Activated naive CD4-positive, alpha-beta T cell treated with anti-CD3 and anti-CD28 coated beads for 36 hours (primary cell): ENCODE measurements at regions of chr18 and their contacts with region 1.

Region 1: GRCh38 chr18:5197032-5197434 is at the start of gene AKAIN1:
- DNase-seq: peak; percentile 30
- H3K4me3 Mint-ChIP-seq: peak within 1 kb of the TSS; percentile 72
- H3K27ac Mint-ChIP-seq: no peak within 1 kb of the TSS
- H3K4me1 Mint-ChIP-seq: peaks cover 20% of the 10 kb centered on the region
- H3K27me3 Mint-ChIP-seq: peaks cover 58% of the 10 kb centered on the region
- total RNA-seq, gene AKAIN1: not detected

Region 2: GRCh38 chr18:5106730-5107129 is 90.3 kb before region 1 on chr18:
- CTCF ChIA-PET with region 1: no interaction called
- intact Hi-C with region 1: loop called (anchors 2 kb)
- DNase-seq: no peak
- H3K4me3 Mint-ChIP-seq: no peak overlapping the region
- H3K27ac Mint-ChIP-seq: no peak overlapping the region
- H3K4me1 Mint-ChIP-seq: peaks cover 5% of the 10 kb centered on the region
- H3K27me3 Mint-ChIP-seq: no peaks in the 10 kb centered on the region

Region 3: DNA sequence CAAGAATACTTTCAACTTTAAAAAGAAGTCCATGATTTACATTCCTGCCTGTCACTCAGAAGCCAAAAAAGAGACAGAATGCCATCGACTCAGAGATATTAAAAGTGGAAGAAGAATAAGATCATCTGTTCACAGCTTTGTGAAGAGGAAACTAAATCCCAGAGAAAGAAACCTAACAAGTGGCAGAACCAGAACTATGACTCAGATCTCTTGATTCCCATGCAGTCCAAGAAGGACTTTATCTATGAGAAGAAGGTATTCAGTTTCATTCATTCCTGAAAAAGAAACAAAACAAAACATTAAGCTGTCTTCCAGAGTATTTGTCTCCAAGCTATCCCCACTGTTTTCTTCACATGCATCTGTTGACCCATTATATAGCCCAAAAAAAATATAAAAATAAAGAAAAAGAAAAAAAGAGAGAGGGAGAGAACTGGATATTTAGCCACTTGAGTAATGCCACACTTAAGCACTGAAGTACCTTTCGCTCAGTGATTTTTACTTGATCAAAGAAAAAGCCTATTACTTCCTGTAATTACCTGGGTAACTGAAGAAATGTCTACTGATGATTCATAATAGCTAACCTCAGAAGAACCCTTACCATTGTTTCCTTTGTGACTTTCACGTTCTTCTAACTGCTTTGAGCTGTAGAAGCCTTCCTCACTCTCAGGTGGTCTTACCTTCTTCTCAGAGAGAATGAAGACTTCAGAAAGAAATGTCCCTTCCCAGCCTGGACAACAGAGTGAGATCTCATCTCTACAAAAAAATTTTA is 17.7 kb after region 1 on chr18:
- CTCF ChIA-PET with region 1: no interaction called
- intact Hi-C with region 1: loop called (anchors 2 kb)
- DNase-seq: no peak
- H3K4me3 Mint-ChIP-seq: no peak overlapping the region
- H3K27ac Mint-ChIP-seq: peak overlapping the region; percentile 10
- H3K4me1 Mint-ChIP-seq: peaks cover 20% of the 10 kb centered on the region
- H3K27me3 Mint-ChIP-seq: no peaks in the 10 kb centered on the region